Activated CD8-positive, alpha-beta T cell treated with anti-CD3 and anti-CD28 coated beads for 36 hours (primary cell): ENCODE measurements at regions of chr7 and their contacts with region 1.

Region 1: GRCh38 chr7:42911454-42912447 is at the start of gene C7orf25:
- DNase-seq: peak; percentile 96
- ATAC-seq: peak; percentile 92
- H3K4me3 Mint-ChIP-seq: peak within 1 kb of the TSS; percentile 87
- H3K27ac Mint-ChIP-seq: peak within 1 kb of the TSS; percentile 90
- H3K4me1 Mint-ChIP-seq: peaks cover 59% of the 10 kb centered on the region
- H3K27me3 Mint-ChIP-seq: no peaks in the 10 kb centered on the region
- CTCF ChIP-seq: no peak
- total RNA-seq, gene C7orf25: 2.4 to 3.4 TPM

Region 2: DNA sequence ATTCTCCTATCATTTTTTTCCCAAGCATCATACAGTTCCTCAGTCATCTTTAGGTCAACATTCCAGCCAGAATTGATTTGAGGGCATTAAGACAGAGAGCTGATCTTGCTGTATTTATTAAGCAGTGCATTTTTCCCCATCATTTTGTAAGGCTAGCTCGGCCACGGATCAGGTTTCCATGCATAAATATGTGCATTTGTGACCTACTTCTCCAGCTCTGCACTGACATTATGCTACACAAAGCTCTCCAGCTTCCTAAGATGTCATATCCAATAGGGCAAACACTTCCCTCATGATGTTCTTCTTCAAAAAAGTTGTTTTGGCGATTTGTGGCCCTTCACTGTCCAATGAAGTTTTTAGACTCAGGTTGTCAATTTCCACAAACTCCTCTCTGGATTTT is 202.5 kb before region 1 on chr7:
- CTCF ChIA-PET with region 1: no interaction called
- POLR2A ChIA-PET with region 1: no interaction called
- intact Hi-C with region 1: no loop called
- DNase-seq: no peak
- ATAC-seq: no peak
- H3K4me3 Mint-ChIP-seq: no peak overlapping the region
- H3K27ac Mint-ChIP-seq: no peak overlapping the region
- H3K4me1 Mint-ChIP-seq: no peaks in the 10 kb centered on the region
- H3K27me3 Mint-ChIP-seq: peaks cover 2% of the 10 kb centered on the region
- CTCF ChIP-seq: no peak

Region 3: DNA sequence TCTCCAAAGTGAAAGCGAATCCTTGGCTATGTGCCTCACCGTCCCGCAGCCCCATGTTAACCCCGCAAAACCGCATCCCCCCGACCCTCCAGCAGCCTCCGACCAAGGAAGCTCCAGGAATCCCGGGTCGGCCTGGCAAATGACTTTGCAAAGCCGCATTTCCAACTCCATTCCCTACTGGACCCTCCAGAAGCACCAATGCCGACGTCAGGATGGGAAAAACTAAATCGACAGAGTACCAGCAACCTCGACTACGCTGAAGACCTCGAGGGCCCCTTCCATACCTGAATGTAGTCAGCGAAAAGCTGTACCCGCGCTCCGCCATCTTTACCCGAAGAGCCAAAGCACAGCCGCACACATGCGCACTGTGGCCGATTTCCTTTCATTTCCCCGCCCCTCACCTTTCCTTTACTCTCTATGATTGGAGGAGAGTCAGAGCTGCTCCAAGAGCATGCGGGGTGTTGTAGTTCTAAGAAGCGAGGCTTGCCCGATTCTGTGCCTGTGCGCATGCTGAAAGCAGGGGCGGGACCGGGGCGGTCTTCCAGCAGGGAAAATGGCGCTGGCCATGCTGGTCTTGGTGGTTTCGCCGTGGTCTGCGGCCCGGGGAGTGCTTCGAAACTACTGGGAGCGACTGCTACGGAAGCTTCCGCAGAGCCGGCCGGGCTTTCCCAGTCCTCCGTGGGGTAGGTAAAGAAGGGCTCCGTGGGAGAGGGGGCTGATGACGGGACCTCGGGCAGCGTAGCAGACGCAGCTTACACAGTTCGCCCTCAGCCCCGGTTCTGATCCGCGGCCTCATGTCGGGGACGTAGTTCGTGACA is 20.3 kb after region 1 on chr7 and contains the starts of genes MRPL32 and PSMA2:
- CTCF ChIA-PET with region 1: interaction called, 5 read pairs
- POLR2A ChIA-PET with region 1: interaction called, 57 read pairs
- intact Hi-C with region 1: loop called (anchors 2 kb)
- DNase-seq: peak; percentile 96
- ATAC-seq: peak; percentile 98
- H3K4me3 Mint-ChIP-seq: peak within 1 kb of the TSS; percentile 100
- H3K27ac Mint-ChIP-seq: peak within 1 kb of the TSS; percentile 100
- H3K4me1 Mint-ChIP-seq: peaks cover 59% of the 10 kb centered on the region
- H3K27me3 Mint-ChIP-seq: no peaks in the 10 kb centered on the region
- CTCF ChIP-seq: no peak
- total RNA-seq, gene MRPL32: 66.9 to 68.5 TPM
- total RNA-seq, gene PSMA2: 193 to 197 TPM